Activated CD4-positive, alpha-beta memory T cell treated with anti-CD3 and anti-CD28 coated beads, Interleukin-2, amount 10 ng/mL, durations not matched to agents 7 days and 5 days (primary cell): ENCODE measurements at regions of chr4 and their contacts with region 1.

Region 1: GRCh38 chr4:112284662-112285411 is 867 bp downstream of the TIFA start:
- DNase-seq: no peak
- H3K4me3 Mint-ChIP-seq: peak overlapping the region; percentile 92
- H3K27ac Mint-ChIP-seq: peak overlapping the region; percentile 81
- H3K4me1 Mint-ChIP-seq: peaks cover 81% of the 10 kb centered on the region
- H3K27me3 Mint-ChIP-seq: no peaks in the 10 kb centered on the region

Region 2: GRCh38 chr4:112296949-112297880 is 12.4 kb after region 1 on chr4 and contains the start of gene ALPK1:
- CTCF ChIA-PET with region 1: interaction called, 5 read pairs
- POLR2A ChIA-PET with region 1: interaction called, 33 read pairs
- DNase-seq: no peak
- H3K4me3 Mint-ChIP-seq: peak within 1 kb of the TSS; percentile 74
- H3K27ac Mint-ChIP-seq: peak within 1 kb of the TSS; percentile 68
- H3K4me1 Mint-ChIP-seq: peaks cover 25% of the 10 kb centered on the region
- H3K27me3 Mint-ChIP-seq: no peaks in the 10 kb centered on the region
- total RNA-seq, gene ALPK1: 11.4 to 12.3 TPM

Region 3: GRCh38 chr4:112302320-112303274 is 17.8 kb after region 1 on chr4:
- CTCF ChIA-PET with region 1: interaction called, 5 read pairs
- POLR2A ChIA-PET with region 1: interaction called, 33 read pairs
- DNase-seq: no peak
- H3K4me3 Mint-ChIP-seq: no peak overlapping the region
- H3K27ac Mint-ChIP-seq: no peak overlapping the region
- H3K4me1 Mint-ChIP-seq: peaks cover 13% of the 10 kb centered on the region
- H3K27me3 Mint-ChIP-seq: no peaks in the 10 kb centered on the region